Activated T-helper 1 cell treated with anti-CD3 and anti-CD28 coated beads, Interleukin-12 subunit alpha, Interleukin-12 subunit beta, Interleukin-2, Interleukin-4 antibody, amounts not matched to agents 30 ng/mL and 10 ng/mL and 1 ng/mL, durations not matched to agents 14 hours and 24 hours and 36 hours (primary cell): ENCODE measurements at regions of chr6 and their contacts with region 1.

Region 1: DNA sequence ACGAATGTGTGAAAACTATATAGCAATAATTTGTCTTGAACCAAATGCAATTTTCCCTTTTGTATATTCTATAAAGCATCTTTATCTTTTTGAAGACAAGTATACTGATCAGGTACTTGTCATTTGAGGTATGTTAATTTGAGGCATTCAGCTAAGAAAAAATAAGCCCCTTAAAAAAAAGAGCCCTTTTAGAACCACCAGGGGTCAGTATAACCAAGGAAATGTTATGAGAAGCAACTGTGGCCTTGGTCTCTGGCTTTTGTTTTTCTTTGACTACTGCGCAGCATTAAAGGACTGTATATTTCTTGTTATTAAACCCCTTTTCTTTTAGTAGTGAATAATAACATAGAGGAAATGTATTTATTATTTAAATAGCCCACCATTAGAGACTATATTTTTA is 43.1 kb downstream of the CD109 start:
- DNase-seq: no peak
- H3K4me3 Mint-ChIP-seq: no peak overlapping the region
- H3K27ac Mint-ChIP-seq: no peak overlapping the region
- H3K4me1 Mint-ChIP-seq: peaks cover 13% of the 10 kb centered on the region
- H3K27me3 Mint-ChIP-seq: no peaks in the 10 kb centered on the region

Region 2: GRCh38 chr6:74091136-74091793 is 352.2 kb after region 1 on chr6:
- intact Hi-C with region 1: loop called (anchors 5 kb)
- DNase-seq: no peak
- H3K4me3 Mint-ChIP-seq: no peak overlapping the region
- H3K27ac Mint-ChIP-seq: no peak overlapping the region
- H3K4me1 Mint-ChIP-seq: no peaks in the 10 kb centered on the region
- H3K27me3 Mint-ChIP-seq: peaks cover 5% of the 10 kb centered on the region

Region 3: GRCh38 chr6:74574794-74575193 is 835.7 kb after region 1 on chr6:
- intact Hi-C with region 1: loop called (anchors 5 kb)
- DNase-seq: no peak
- H3K4me3 Mint-ChIP-seq: no peak overlapping the region
- H3K27ac Mint-ChIP-seq: no peak overlapping the region
- H3K4me1 Mint-ChIP-seq: no peaks in the 10 kb centered on the region
- H3K27me3 Mint-ChIP-seq: no peaks in the 10 kb centered on the region